A549 (cell line): ENCODE measurements at regions of chr7 and their contacts with region 1.

Region 1: GRCh38 chr7:27210441-27211083 is 10.7 kb upstream of the HOXA13 start:
- DNase-seq: peak; percentile 64 to 79
- ATAC-seq: peak; percentile 91 to 94
- H3K4me3 ChIP-seq: peak overlapping the region; percentile 33
- H3K27ac ChIP-seq: peak overlapping the region; percentile 50 to 69
- H3K4me1 ChIP-seq: peaks cover 12% of the 10 kb centered on the region; the same call in 2 of the 3 replicates
- CTCF ChIP-seq: peak; percentile 67
- EP300 ChIP-seq: no peak
- POLR2A ChIP-seq: no peak
- RAD21 ChIP-seq: peak; percentile 77 to 79

Region 2: GRCh38 chr7:27066148-27066547 is 144.4 kb before region 1 on chr7:
- CTCF ChIA-PET with region 1: no interaction called
- POLR2A ChIA-PET with region 1: no interaction called
- DNase-seq: no peak
- ATAC-seq: no peak
- H3K4me3 ChIP-seq: no peak overlapping the region
- H3K27ac ChIP-seq: no peak overlapping the region
- H3K4me1 ChIP-seq: no peaks in the 10 kb centered on the region
- CTCF ChIP-seq: no peak
- EP300 ChIP-seq: no peak
- POLR2A ChIP-seq: no peak
- RAD21 ChIP-seq: no peak

Region 3: GRCh38 chr7:27080844-27081436 is 129.6 kb before region 1 on chr7:
- CTCF ChIA-PET with region 1: no interaction called
- POLR2A ChIA-PET with region 1: no interaction called
- DNase-seq: no peak
- ATAC-seq: peak; percentile 80 to 81
- H3K4me3 ChIP-seq: no peak overlapping the region
- H3K27ac ChIP-seq: peak overlapping the region in 1 of 2 experiments; percentile 23; a peak in 2 of 6 replicates
- H3K4me1 ChIP-seq: peaks cover 29% of the 10 kb centered on the region
- CTCF ChIP-seq: no peak
- EP300 ChIP-seq: no peak
- POLR2A ChIP-seq: no peak
- RAD21 ChIP-seq: no peak

Region 4: DNA sequence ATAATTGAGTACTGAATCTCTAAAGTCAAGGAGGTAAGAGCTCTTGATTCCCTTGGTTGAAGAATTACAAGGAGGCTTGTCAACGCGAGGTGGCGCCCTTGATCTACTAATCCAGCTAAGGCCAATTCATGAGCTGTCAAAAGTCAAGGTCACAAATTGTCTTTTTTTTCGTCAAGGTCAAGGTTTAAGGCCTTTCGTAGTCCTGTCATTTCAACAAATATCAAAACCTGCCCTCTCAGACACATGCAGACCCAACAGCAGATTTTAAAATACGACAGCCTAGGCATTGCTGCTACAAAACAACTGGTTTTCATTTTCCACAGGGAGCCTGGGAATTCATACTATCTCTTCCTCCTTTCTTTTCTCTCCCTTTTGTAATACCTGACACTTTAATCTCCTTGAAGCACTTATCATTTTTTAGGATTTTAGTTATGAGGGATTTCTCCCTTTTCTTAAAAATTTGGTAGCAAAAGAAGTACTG is 14.2 kb before region 1 on chr7:
- CTCF ChIA-PET with region 1: interaction called, 33 read pairs
- POLR2A ChIA-PET with region 1: no interaction called
- DNase-seq: peak; percentile 58 to 79
- ATAC-seq: no peak
- H3K4me3 ChIP-seq: no peak overlapping the region
- H3K27ac ChIP-seq: no peak overlapping the region
- H3K4me1 ChIP-seq: peaks cover 15% of the 10 kb centered on the region
- CTCF ChIP-seq: peak; percentile 96
- EP300 ChIP-seq: no peak
- POLR2A ChIP-seq: no peak
- RAD21 ChIP-seq: peak; percentile 97 to 98

Region 5: DNA sequence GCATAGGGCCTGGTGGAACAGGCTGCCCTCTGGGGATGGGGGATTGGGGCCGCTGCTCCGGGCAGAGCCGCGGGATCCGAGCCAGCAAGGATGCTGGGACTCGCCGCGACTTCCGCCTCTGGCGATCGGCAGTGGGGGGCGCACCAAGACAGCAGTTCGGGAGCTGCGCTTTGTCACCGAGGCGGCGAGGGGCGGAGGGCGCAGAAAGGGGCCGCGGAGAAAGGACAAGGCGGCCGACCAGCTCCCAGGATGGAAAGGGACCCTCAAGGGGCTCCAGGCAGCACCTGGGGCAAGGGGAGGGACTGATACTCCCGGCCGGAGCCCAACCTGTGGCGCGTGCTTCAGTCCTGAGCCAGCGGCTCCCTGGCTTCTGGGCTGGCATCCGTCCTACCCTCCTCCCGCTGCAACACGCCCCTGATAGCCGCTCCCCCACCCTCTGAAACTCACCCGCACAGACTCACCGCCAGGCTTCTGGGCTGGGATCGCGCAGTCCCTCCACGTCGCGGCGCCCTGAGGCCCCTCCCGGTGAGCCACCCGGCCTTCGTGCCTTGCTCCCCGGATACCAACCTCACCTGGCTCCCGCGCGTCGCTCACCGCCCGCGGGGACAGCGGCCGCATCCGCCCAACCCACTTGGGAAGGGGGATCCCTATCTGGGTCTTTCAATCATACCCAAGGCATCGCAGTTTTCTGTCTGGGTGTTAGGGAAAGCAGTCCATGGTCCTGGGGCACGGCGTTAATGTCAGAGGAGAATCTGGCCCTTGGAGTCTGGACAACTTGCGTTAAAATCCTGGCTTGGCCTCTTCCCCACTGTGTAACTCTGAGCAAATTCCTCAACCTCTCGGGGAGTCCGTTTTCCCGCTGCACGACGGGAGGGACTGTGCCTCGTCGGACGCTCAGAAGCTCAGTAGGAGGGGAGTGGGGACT is 25.1 kb after region 1 on chr7:
- CTCF ChIA-PET with region 1: interaction called, 18 read pairs
- POLR2A ChIA-PET with region 1: no interaction called
- DNase-seq: peak; percentile 70 to 73
- ATAC-seq: peak; percentile 89 to 92
- H3K4me3 ChIP-seq: peak overlapping the region; percentile 57
- H3K27ac ChIP-seq: peak overlapping the region; percentile 81 to 91
- H3K4me1 ChIP-seq: peaks cover 8% of the 10 kb centered on the region; the same call in 2 of the 3 replicates
- CTCF ChIP-seq: peak; percentile 80
- EP300 ChIP-seq: no peak
- POLR2A ChIP-seq: peak; percentile 19; the same call in 1 of the 2 replicates
- RAD21 ChIP-seq: peak; percentile 90 to 97

Region 6: GRCh38 chr7:27576360-27576944 is 365.9 kb after region 1 on chr7:
- CTCF ChIA-PET with region 1: interaction called, 15 read pairs
- POLR2A ChIA-PET with region 1: no interaction called
- DNase-seq: peak; percentile 14 to 38
- ATAC-seq: peak; percentile 47 to 78; a peak in 4 of 6 replicates
- H3K4me3 ChIP-seq: no peak overlapping the region
- H3K27ac ChIP-seq: no peak overlapping the region
- H3K4me1 ChIP-seq: peaks cover 7% of the 10 kb centered on the region; the same call in 2 of the 3 replicates
- CTCF ChIP-seq: peak; percentile 85
- EP300 ChIP-seq: no peak
- POLR2A ChIP-seq: no peak
- RAD21 ChIP-seq: peak; percentile 74 to 83

Region 7: GRCh38 chr7:27774717-27775328 is 564.3 kb after region 1 on chr7:
- CTCF ChIA-PET with region 1: interaction called, 12 read pairs
- POLR2A ChIA-PET with region 1: no interaction called
- DNase-seq: peak in 1 of 2 experiments; percentile 55
- ATAC-seq: peak in 1 of 2 experiments; percentile 67; a peak in 3 of 6 replicates
- H3K4me3 ChIP-seq: no peak overlapping the region
- H3K27ac ChIP-seq: no peak overlapping the region
- H3K4me1 ChIP-seq: peaks cover 26% of the 10 kb centered on the region
- CTCF ChIP-seq: peak; percentile 88
- EP300 ChIP-seq: no peak
- POLR2A ChIP-seq: no peak
- RAD21 ChIP-seq: peak; percentile 84 to 88